ENCODE measurements at regions of chr1 and their contacts with region 1.

Region 1: GRCh38 chr1:167517535-167518330 is 596 bp downstream of the CD247 start:
- DNase-seq: peak; percentile 72 to 92 (median 78)
- H3K4me3 ChIP-seq: peak overlapping the region; percentile 97
- H3K4me3 Mint-ChIP-seq: peak overlapping the region; percentile 94 to 100 (median 100)
- H3K27ac ChIP-seq: peak overlapping the region; percentile 97
- H3K27ac Mint-ChIP-seq: peak overlapping the region; percentile 97 to 100 (median 99)
- H3K4me1 ChIP-seq: peaks cover 47% of the 10 kb centered on the region
- H3K4me1 Mint-ChIP-seq: peaks cover 38 to 60% (median 56%) of the 10 kb centered on the region in 3 donors
- H3K27me3 ChIP-seq: no peaks in the 10 kb centered on the region
- H3K27me3 Mint-ChIP-seq: no peaks in the 10 kb centered on the region

Region 2: GRCh38 chr1:167220537-167221125 is 297.1 kb before region 1 on chr1 and contains the start of gene POU2F1:
- CTCF ChIA-PET with region 1: interaction called, 20 read pairs
- POLR2A ChIA-PET with region 1: interaction called, 15 read pairs
- DNase-seq: peak; percentile 96 to 100 (median 98)
- H3K4me3 ChIP-seq: peak within 1 kb of the TSS; percentile 100
- H3K4me3 Mint-ChIP-seq: peak within 1 kb of the TSS; percentile 91 to 98 (median 92)
- H3K27ac ChIP-seq: peak within 1 kb of the TSS; percentile 88
- H3K27ac Mint-ChIP-seq: peak within 1 kb of the TSS; percentile 82 to 97 (median 92)
- H3K4me1 ChIP-seq: peaks cover 28% of the 10 kb centered on the region
- H3K4me1 Mint-ChIP-seq: peaks cover 27 to 48% (median 43%) of the 10 kb centered on the region in 3 donors
- H3K27me3 ChIP-seq: no peaks in the 10 kb centered on the region
- H3K27me3 Mint-ChIP-seq: peaks cover 0 to 5% of the 10 kb centered on the region in 2 donors
- total RNA-seq, gene POU2F1: 12.3 to 13.5 TPM

Region 3: GRCh38 chr1:167430134-167430856 is 87.4 kb before region 1 on chr1:
- CTCF ChIA-PET with region 1: interaction called, 15 read pairs
- POLR2A ChIA-PET with region 1: interaction called, 8 read pairs
- DNase-seq: peak in 1 of 5 donors; percentile 54
- H3K4me3 ChIP-seq: no peak overlapping the region
- H3K4me3 Mint-ChIP-seq: peak overlapping the region; percentile 0 to 83 (median 41)
- H3K27ac ChIP-seq: no peak overlapping the region
- H3K27ac Mint-ChIP-seq: peak overlapping the region; percentile 75 to 98 (median 92)
- H3K4me1 ChIP-seq: peaks cover 41% of the 10 kb centered on the region
- H3K4me1 Mint-ChIP-seq: peaks cover 54 to 75% (median 56%) of the 10 kb centered on the region in 3 donors
- H3K27me3 ChIP-seq: no peaks in the 10 kb centered on the region
- H3K27me3 Mint-ChIP-seq: peaks cover 0 to 3% of the 10 kb centered on the region in 2 donors

Region 4: DNA sequence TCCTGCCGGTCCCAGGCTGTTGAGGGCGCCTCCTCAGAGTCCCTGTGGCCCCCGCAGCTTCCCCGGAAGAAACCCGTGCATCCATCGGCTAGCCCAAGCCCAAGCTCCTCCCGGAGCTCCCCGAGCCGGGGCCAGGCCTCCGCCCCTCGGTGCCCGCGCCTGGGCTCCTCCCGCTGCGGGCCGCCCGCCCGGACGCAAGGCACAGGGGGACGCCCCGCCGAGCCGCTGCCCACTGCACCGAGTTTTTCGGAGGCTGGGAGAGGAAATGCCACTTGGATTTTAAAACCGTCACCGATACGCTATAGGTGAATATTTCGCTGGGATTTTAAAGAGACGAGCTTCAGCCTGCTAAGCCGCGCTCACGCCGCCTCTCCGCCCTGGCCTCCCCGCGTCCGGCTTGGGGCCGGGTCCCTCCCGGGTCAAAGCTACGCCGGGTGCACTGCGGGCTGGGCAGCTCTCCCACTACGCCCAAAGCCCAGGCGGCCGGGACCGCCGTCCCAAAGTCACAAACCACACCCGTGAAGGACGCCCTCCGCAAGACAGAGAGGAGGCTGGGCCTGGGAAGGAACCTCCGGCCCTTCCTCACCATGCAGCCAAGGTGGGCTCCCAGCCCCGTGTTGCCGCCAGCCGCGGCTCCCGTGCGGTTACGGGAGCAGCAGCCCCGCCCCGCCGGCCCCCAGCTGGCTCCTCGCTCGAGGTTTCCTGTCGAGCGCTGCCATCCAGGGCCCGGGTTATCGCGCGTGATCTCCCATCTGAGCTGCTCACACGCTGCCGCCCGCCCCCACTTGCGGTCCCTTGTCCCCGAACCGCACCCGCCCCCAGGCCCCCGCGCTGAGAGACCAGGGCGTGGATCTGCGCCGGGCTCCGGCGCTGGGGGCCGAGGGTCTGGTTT is 62.6 kb before region 1 on chr1:
- CTCF ChIA-PET with region 1: interaction called, 42 read pairs
- POLR2A ChIA-PET with region 1: interaction called, 11 read pairs
- DNase-seq: peak; percentile 78 to 89 (median 83)
- H3K4me3 ChIP-seq: peak overlapping the region; percentile 82
- H3K4me3 Mint-ChIP-seq: peak overlapping the region; percentile 72 to 91 (median 86)
- H3K27ac ChIP-seq: peak overlapping the region; percentile 66
- H3K27ac Mint-ChIP-seq: peak overlapping the region; percentile 48 to 94 (median 82)
- H3K4me1 ChIP-seq: peaks cover 73% of the 10 kb centered on the region
- H3K4me1 Mint-ChIP-seq: peaks cover 56 to 81% (median 69%) of the 10 kb centered on the region in 3 donors
- H3K27me3 ChIP-seq: no peaks in the 10 kb centered on the region
- H3K27me3 Mint-ChIP-seq: no peaks in the 10 kb centered on the region

Region 5: GRCh38 chr1:167491586-167492461 is 25.9 kb before region 1 on chr1:
- CTCF ChIA-PET with region 1: interaction called, 8 read pairs
- POLR2A ChIA-PET with region 1: interaction called, 17 read pairs
- DNase-seq: peak in 1 of 5 donors; percentile 37
- H3K4me3 ChIP-seq: peak overlapping the region; percentile 23
- H3K4me3 Mint-ChIP-seq: peak overlapping the region; percentile 60 to 89 (median 70)
- H3K27ac ChIP-seq: no peak overlapping the region
- H3K27ac Mint-ChIP-seq: peak overlapping the region; percentile 82 to 97 (median 94)
- H3K4me1 ChIP-seq: peaks cover 98% of the 10 kb centered on the region
- H3K4me1 Mint-ChIP-seq: peaks cover 91 to 100% (median 99%) of the 10 kb centered on the region in 3 donors
- H3K27me3 ChIP-seq: no peaks in the 10 kb centered on the region
- H3K27me3 Mint-ChIP-seq: no peaks in the 10 kb centered on the region

Region 6: DNA sequence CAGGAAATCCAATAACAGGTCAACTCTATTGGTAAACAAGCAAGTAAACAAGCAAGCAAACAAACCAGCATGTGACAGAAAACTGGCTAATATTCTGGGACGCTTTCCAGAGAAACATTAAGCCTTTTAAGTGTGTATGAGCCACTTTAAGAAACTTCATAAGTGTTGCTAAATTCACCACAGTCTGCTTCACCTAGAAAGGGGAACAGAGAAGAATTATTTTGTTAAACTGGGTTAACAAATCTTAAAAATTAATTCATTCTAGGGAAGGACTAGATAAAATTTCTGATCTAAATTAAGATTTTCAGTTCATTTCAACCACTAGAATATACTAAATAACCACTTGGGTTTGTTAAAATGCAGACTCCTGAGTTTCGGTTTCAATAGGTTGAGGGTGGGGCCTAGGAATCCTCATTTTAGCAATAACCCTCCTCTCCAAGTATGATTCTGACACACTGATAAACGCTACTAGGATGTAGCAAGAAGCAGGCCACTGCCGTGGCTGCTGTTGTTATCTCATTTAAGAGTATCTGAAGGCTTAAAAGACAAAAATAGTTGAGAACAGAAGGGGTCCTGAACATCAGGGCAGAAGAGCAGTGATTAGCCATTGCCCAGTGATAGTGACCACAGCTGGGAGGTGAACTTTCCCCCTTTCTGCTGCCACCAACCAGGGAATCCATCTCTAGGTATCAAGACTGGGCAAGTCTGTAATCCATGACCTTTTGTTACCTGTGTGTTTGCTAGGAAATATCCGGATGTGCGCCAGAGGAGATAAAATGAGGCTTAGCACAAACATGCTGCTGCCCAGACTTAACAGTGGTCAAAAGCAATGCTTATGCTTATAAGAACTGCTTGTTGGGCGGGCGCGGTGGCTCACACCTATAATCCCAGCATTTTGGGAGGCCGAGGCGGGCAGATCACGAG is 24.6 kb after region 1 on chr1:
- CTCF ChIA-PET with region 1: interaction called, 21 read pairs
- POLR2A ChIA-PET with region 1: interaction called, 5 read pairs
- DNase-seq: no peak
- H3K4me3 ChIP-seq: no peak overlapping the region
- H3K4me3 Mint-ChIP-seq: no peak overlapping the region
- H3K27ac ChIP-seq: no peak overlapping the region
- H3K27ac Mint-ChIP-seq: no peak overlapping the region
- H3K4me1 ChIP-seq: no peaks in the 10 kb centered on the region
- H3K4me1 Mint-ChIP-seq: peaks cover 4 to 22% (median 19%) of the 10 kb centered on the region in 3 donors
- H3K27me3 ChIP-seq: no peaks in the 10 kb centered on the region
- H3K27me3 Mint-ChIP-seq: no peaks in the 10 kb centered on the region

Region 7: DNA sequence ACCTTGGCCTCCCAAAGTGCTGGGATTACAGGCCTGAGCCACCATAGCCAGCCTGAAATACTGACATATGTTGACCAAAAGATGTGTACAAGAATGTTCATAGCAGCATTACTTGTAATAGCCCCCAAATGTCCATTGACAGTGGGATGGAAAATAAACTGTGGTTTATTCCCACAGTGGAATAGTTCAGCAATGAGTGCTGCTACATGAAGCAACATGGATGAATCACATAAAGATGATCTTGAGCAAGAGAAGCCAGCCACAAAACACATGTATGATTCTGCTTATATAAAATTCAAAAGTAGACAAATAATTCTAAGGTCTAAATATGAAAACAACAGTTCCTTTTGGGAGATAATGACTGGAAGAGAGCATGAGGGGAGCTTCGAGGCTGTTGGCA is 45.0 kb after region 1 on chr1:
- CTCF ChIA-PET with region 1: no interaction called
- POLR2A ChIA-PET with region 1: no interaction called
- DNase-seq: no peak
- H3K4me3 ChIP-seq: no peak overlapping the region
- H3K4me3 Mint-ChIP-seq: no peak overlapping the region
- H3K27ac ChIP-seq: no peak overlapping the region
- H3K27ac Mint-ChIP-seq: no peak overlapping the region
- H3K4me1 ChIP-seq: no peaks in the 10 kb centered on the region
- H3K4me1 Mint-ChIP-seq: no peaks in the 10 kb centered on the region
- H3K27me3 ChIP-seq: no peaks in the 10 kb centered on the region
- H3K27me3 Mint-ChIP-seq: peaks cover 5 to 7% of the 10 kb centered on the region in 2 donors

Region 8: DNA sequence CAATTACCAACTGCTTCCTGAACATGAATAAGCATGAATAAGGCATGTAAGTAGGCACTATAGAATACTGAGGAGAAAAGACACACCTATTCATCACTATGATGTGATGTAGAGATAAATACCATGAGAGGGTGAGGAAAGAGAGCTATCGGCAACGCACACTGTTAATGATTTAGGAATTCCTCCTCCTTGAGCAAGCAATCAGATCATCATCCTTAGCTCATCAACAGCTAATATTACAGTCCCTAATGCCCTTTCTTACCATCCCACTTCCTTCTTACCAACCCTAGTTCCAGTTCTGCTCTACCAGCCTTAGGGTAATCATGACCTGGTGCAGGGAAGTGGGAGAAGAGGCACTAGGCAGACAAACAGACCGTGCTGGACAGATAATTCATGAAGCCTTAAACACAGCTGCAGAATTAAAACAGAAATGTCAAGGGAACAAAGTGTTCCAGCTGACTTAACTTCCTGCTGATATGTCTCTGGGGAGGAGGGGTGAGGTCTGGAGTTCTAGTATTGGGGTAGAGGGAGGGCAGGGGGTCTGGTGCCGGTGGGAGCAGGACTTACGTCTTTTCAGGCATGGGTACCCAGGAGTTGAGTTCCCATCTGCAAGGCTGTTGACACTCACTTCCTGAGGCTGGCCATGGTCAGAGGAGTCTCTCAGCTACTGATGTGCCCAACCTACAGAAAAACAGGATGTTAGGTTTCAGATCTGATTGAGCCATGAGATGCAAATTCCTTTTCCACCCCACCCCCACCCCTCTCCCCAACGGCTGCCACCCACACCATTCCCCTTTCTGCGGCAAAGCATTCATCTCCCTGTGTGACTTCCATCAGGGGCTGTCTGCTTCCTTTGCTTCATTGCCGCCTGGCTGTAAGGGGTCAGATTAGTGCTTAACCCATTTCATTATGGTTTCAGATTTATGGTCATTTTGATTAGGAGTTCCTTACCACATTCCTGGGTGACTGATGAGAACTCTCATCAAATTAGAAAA is 99.7 kb after region 1 on chr1:
- CTCF ChIA-PET with region 1: no interaction called
- POLR2A ChIA-PET with region 1: no interaction called
- DNase-seq: peak in 1 of 5 donors; percentile 18
- H3K4me3 ChIP-seq: peak overlapping the region; percentile 39
- H3K4me3 Mint-ChIP-seq: peak overlapping the region in 6 of 7 donors; percentile 70 to 80 (median 76)
- H3K27ac ChIP-seq: peak overlapping the region; percentile 32
- H3K27ac Mint-ChIP-seq: peak overlapping the region; percentile 37 to 94 (median 89)
- H3K4me1 ChIP-seq: peaks cover 38% of the 10 kb centered on the region
- H3K4me1 Mint-ChIP-seq: peaks cover 39 to 78% (median 50%) of the 10 kb centered on the region in 3 donors
- H3K27me3 ChIP-seq: no peaks in the 10 kb centered on the region
- H3K27me3 Mint-ChIP-seq: no peaks in the 10 kb centered on the region